BJ (cell line): ENCODE measurements at regions of chr9 and their contacts with region 1.

Region 1: DNA sequence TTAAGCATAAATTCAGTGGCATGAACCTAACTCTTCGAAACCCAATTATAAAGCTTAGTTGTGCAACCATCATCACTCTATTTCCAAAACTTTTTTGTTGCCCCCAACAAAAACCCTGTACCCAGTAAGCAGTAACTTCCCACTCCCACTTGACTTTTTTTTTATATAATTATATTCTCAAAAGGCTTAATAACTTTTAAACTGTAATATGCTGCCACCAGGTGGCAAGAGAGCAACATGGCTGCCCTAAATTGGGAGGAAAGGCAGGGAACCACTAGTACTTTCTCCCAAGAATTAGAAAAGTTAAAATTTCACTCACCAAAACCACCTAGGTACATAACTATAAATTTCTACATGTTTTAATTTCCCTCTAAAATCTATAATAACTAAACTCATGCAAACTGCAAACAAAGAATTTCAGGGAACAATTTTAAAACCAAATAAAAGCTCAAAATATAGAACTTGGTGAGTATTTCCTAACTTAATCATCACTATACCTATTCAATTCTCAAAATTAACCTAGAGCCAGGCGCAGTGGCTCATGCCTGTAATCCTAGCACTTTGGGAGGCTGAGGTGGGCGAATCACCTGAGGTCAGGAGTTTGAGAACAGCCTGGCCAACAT is 50.2 kb upstream of the RNF38 start:
- DNase-seq: no peak
- H3K4me3 ChIP-seq: no peak overlapping the region
- H3K27me3 ChIP-seq: no peaks in the 10 kb centered on the region
- CTCF ChIP-seq: peak; percentile 80

Region 2: GRCh38 chr9:36423206-36423605 is 27.0 kb before region 1 on chr9:
- CTCF ChIA-PET with region 1: interaction called, 10 read pairs
- POLR2A ChIA-PET with region 1: no interaction called
- DNase-seq: no peak
- H3K4me3 ChIP-seq: no peak overlapping the region
- H3K27me3 ChIP-seq: no peaks in the 10 kb centered on the region
- CTCF ChIP-seq: no peak

Region 3: GRCh38 chr9:36436909-36437308 is 13.3 kb before region 1 on chr9:
- CTCF ChIA-PET with region 1: interaction called, 11 read pairs
- POLR2A ChIA-PET with region 1: no interaction called
- DNase-seq: no peak
- H3K4me3 ChIP-seq: no peak overlapping the region
- H3K27me3 ChIP-seq: no peaks in the 10 kb centered on the region
- CTCF ChIP-seq: no peak